Activated CD4-positive, alpha-beta memory T cell treated with anti-CD3 and anti-CD28 coated beads for 36 hours (primary cell): ENCODE measurements at regions of chr5 and their contacts with region 1.

Region 1: DNA sequence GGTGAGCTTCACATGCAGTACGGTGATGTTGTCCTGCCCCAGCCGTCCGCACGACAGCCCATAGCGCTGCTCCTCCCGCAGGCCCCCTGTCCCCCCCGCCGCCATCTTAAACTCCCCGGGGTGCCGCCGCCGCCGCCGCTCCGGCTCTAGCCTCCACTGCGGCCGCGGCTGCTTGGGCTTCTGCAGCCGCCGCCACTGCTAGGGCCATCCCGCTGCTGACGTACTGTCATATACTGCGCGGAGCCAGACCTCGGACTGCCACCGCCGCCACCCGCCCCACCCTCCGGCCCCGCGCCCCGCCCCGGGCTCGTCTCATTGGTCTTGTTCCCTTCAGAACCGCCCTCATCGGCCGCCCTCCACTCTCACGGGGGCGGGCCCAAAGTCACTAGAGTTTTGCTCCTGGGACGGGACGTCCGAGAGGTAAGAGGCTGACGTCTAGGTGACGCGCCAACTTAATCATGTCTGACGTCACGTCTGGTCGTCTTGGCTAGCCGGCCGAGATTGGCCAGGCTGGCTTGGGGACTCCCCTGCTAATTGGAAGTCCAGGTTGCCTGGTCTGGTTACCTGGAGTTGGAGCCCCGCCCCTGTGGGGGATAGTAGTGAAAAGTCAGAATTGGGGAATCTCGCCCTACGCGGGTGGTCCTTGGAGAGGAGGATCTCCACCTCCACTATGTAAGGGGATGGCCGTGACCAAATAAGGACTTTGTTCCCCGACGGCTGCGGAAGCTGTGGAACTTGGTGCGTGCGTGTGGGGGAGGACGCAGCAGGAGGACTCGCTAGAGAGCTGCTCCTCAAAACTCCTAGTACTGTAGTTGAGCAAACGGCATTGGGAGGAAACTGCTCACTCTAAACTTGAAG is at the start of gene ELL2:
- DNase-seq: peak; percentile 99
- H3K4me3 Mint-ChIP-seq: peak within 1 kb of the TSS; percentile 98
- H3K27ac Mint-ChIP-seq: peak within 1 kb of the TSS; percentile 98
- H3K4me1 Mint-ChIP-seq: peaks cover 62% of the 10 kb centered on the region
- H3K27me3 Mint-ChIP-seq: no peaks in the 10 kb centered on the region
- total RNA-seq, gene ELL2: 127 to 132 TPM

Region 2: GRCh38 chr5:95620030-95620869 is 341.6 kb before region 1 on chr5 and contains the start of gene GPR150:
- CTCF ChIA-PET with region 1: no interaction called
- POLR2A ChIA-PET with region 1: no interaction called
- intact Hi-C with region 1: loop called (anchors 5 kb)
- DNase-seq: peak; percentile 78
- H3K4me3 Mint-ChIP-seq: peak within 1 kb of the TSS; percentile 80
- H3K27ac Mint-ChIP-seq: peak within 1 kb of the TSS; percentile 66
- H3K4me1 Mint-ChIP-seq: peaks cover 55% of the 10 kb centered on the region
- H3K27me3 Mint-ChIP-seq: no peaks in the 10 kb centered on the region
- total RNA-seq, gene GPR150: 0.50 to 0.82 TPM

Region 3: GRCh38 chr5:95927927-95928723 is 33.7 kb before region 1 on chr5:
- CTCF ChIA-PET with region 1: no interaction called
- POLR2A ChIA-PET with region 1: interaction called, 5 read pairs
- intact Hi-C with region 1: loop called (anchors 2 kb)
- DNase-seq: no peak
- H3K4me3 Mint-ChIP-seq: no peak overlapping the region
- H3K27ac Mint-ChIP-seq: peak overlapping the region; percentile 84
- H3K4me1 Mint-ChIP-seq: peaks cover 46% of the 10 kb centered on the region
- H3K27me3 Mint-ChIP-seq: no peaks in the 10 kb centered on the region

Region 4: DNA sequence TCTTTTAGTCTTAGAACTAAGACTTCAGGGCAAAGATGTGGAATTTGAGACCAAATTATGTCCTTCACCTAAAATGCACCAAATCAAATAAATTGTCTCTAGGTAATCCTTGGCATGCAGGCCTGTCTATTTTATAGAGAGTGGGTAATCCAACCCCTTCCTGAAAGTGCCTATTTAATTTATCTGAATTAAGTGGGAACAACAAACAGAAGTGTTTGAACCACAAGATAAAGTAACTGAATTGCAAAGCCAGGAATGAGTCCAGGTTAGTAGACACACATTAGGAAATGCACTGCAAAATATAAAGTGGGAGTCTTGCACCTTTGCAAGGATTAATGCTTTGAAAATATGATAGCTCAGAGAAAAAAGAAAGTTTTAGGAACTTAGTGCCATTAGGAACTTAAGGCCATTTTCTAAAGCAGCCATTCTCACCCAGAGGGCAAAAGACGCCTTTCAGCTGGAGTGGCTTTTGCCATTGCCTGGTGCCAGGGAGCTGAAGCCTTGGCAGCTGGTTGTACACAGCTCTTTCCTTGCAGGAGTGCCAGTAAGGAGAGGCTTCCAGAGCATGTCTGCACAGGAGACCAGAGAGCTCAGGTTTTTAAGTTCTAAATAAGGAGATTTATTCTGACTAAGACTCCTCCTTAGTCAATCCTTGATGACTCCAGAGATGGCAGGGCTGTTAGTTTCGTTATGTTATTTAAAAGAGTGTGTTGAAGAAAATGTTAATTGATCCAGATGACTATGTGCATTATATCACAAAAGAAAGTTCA is 151.5 kb after region 1 on chr5:
- CTCF ChIA-PET with region 1: interaction called, 3 read pairs
- POLR2A ChIA-PET with region 1: interaction called, 3 read pairs
- intact Hi-C with region 1: loop called (anchors 1 kb)
- DNase-seq: peak; percentile 13
- H3K4me3 Mint-ChIP-seq: no peak overlapping the region
- H3K27ac Mint-ChIP-seq: no peak overlapping the region
- H3K4me1 Mint-ChIP-seq: peaks cover 41% of the 10 kb centered on the region
- H3K27me3 Mint-ChIP-seq: peaks cover 4% of the 10 kb centered on the region

Region 5: GRCh38 chr5:96536991-96537785 is 575.3 kb after region 1 on chr5:
- CTCF ChIA-PET with region 1: no interaction called
- POLR2A ChIA-PET with region 1: no interaction called
- intact Hi-C with region 1: loop called (anchors 2 kb)
- DNase-seq: no peak
- H3K4me3 Mint-ChIP-seq: peak overlapping the region; percentile 2
- H3K27ac Mint-ChIP-seq: peak overlapping the region; percentile 68
- H3K4me1 Mint-ChIP-seq: peaks cover 33% of the 10 kb centered on the region
- H3K27me3 Mint-ChIP-seq: no peaks in the 10 kb centered on the region

Region 6: GRCh38 chr5:96876292-96876850 is 914.5 kb after region 1 on chr5 and contains the start of gene ERAP2:
- CTCF ChIA-PET with region 1: no interaction called
- POLR2A ChIA-PET with region 1: no interaction called
- intact Hi-C with region 1: loop called (anchors 10 kb)
- DNase-seq: peak; percentile 30
- H3K4me3 Mint-ChIP-seq: peak within 1 kb of the TSS; percentile 96
- H3K27ac Mint-ChIP-seq: peak within 1 kb of the TSS; percentile 97
- H3K4me1 Mint-ChIP-seq: peaks cover 63% of the 10 kb centered on the region
- H3K27me3 Mint-ChIP-seq: no peaks in the 10 kb centered on the region
- total RNA-seq, gene ERAP2: 44.8 to 48.9 TPM